ENCODE measurements at regions of chr12 and their contacts with region 1.

Region 1: DNA sequence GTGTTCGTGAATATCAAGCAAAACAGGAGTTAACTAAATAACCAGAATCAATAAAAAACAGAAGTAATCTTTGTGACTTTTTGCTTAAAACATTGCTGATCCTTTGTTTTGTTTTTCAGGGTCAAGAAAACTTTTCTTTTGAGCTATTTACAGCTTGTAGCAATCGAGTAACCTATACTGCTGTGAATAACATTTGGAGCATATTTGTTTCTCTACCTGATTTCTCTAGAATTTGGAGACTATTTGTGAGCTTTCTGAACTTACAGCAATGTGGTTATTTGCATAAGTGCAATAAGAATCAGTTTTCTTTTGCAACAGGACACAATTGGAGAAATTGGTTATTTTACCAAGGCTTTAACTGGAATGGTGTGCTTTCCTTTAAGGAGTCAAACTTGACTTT is 7.3 kb upstream of the ETNK1 start:
- DNase-seq: no peak
- ATAC-seq: no peak
- H3K4me3 ChIP-seq: no peak overlapping the region
- H3K4me3 Mint-ChIP-seq: no peak overlapping the region
- H3K27ac ChIP-seq: no peak overlapping the region
- H3K27ac Mint-ChIP-seq: no peak overlapping the region
- H3K4me1 ChIP-seq: no peaks in the 10 kb centered on the region
- H3K4me1 Mint-ChIP-seq: no peaks in the 10 kb centered on the region
- H3K27me3 ChIP-seq: no peaks in the 10 kb centered on the region
- H3K27me3 Mint-ChIP-seq: peaks cover 2% of the 10 kb centered on the region
- CTCF ChIP-seq: no peak

Region 2: GRCh38 chr12:22598141-22598762 is 19.4 kb before region 1 on chr12:
- CTCF ChIA-PET with region 1: no interaction called
- POLR2A ChIA-PET with region 1: interaction called, 3 read pairs
- intact Hi-C with region 1: loop called in 1 of 2 experiments (anchors 1 kb)
- DNase-seq: no peak
- ATAC-seq: no peak
- H3K4me3 ChIP-seq: no peak overlapping the region
- H3K4me3 Mint-ChIP-seq: no peak overlapping the region
- H3K27ac ChIP-seq: no peak overlapping the region
- H3K27ac Mint-ChIP-seq: no peak overlapping the region
- H3K4me1 ChIP-seq: no peaks in the 10 kb centered on the region
- H3K4me1 Mint-ChIP-seq: no peaks in the 10 kb centered on the region
- H3K27me3 ChIP-seq: no peaks in the 10 kb centered on the region
- H3K27me3 Mint-ChIP-seq: peaks cover 6% of the 10 kb centered on the region
- CTCF ChIP-seq: no peak

Region 3: GRCh38 chr12:22635812-22636211 is 18.2 kb after region 1 on chr12:
- CTCF ChIA-PET with region 1: no interaction called
- POLR2A ChIA-PET with region 1: no interaction called
- intact Hi-C with region 1: no loop called
- DNase-seq: no peak
- ATAC-seq: no peak
- H3K4me3 ChIP-seq: no peak overlapping the region
- H3K4me3 Mint-ChIP-seq: no peak overlapping the region
- H3K27ac ChIP-seq: no peak overlapping the region
- H3K27ac Mint-ChIP-seq: no peak overlapping the region
- H3K4me1 ChIP-seq: peaks cover 11% of the 10 kb centered on the region
- H3K4me1 Mint-ChIP-seq: peaks cover 66% of the 10 kb centered on the region
- H3K27me3 ChIP-seq: no peaks in the 10 kb centered on the region
- H3K27me3 Mint-ChIP-seq: no peaks in the 10 kb centered on the region
- CTCF ChIP-seq: no peak

Measured in CD8-positive, alpha-beta T cell (primary cell).